Adrenal gland (tissue), 19 donors: ENCODE measurements at regions of chr2 and their contacts with region 1.

Region 1: DNA sequence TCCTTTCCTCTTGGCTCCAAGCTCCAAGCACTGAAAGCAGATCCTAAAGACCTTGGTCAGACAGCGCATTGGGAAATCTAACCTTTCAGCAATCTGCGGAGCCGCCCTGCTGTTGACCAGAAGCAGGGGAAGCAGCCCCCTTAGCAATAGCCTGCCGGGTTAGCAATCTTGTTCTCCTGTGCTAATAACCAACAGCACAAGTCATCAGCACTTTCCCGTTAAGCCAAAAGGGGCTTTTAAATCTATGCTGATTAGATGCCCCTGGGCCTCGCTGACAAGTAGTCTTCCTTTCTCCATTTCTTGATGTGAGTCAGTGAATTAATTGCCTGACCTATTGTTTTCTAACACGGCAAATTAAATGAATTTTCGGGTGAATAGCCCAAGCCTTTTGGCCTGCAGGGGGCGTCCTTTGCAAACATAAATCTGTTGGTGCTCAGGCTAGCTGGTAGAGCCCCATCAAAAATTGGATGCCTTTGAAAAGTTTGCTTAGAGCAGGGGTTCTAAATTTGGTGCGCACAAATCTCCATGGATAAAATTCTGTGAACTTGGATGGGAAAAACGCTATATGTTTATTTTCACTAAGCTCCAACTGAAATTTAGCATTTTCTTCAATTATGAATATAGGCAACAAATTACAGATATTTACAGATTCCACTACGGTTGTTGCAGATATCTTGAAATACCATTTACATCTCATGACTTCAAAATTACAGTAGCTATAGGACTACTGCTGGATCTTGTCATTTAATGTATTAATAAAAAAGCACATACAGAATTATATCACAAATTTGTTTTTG is 24.6 kb downstream of the MAIP1 start:
- DNase-seq: peak; percentile 81 to 97 (median 90)
- H3K4me3 ChIP-seq: peak overlapping the region in 2 of 4 donors; percentile 4 to 39
- H3K27ac ChIP-seq: peak overlapping the region in 3 of 5 donors; percentile 19 to 70 (median 48)
- H3K4me1 ChIP-seq: peaks cover 0 to 9% of the 10 kb centered on the region in 2 donors
- H3K27me3 ChIP-seq: no peaks in the 10 kb centered on the region
- CTCF ChIP-seq: peak; percentile 81 to 93 (median 86)
- POLR2A ChIP-seq: no peak

Region 2: GRCh38 chr2:200483729-200484198 is 503.7 kb after region 1 on chr2:
- intact Hi-C with region 1: loop called (anchors 5 kb)
- DNase-seq: peak; percentile 35 to 72 (median 62)
- H3K4me3 ChIP-seq: no peak overlapping the region
- H3K27ac ChIP-seq: no peak overlapping the region
- H3K4me1 ChIP-seq: no peaks in the 10 kb centered on the region
- H3K27me3 ChIP-seq: no peaks in the 10 kb centered on the region
- CTCF ChIP-seq: peak; percentile 34 to 55 (median 44)
- POLR2A ChIP-seq: no peak